ENCODE measurements at regions of chr5 and their contacts with region 1.

Region 1: DNA sequence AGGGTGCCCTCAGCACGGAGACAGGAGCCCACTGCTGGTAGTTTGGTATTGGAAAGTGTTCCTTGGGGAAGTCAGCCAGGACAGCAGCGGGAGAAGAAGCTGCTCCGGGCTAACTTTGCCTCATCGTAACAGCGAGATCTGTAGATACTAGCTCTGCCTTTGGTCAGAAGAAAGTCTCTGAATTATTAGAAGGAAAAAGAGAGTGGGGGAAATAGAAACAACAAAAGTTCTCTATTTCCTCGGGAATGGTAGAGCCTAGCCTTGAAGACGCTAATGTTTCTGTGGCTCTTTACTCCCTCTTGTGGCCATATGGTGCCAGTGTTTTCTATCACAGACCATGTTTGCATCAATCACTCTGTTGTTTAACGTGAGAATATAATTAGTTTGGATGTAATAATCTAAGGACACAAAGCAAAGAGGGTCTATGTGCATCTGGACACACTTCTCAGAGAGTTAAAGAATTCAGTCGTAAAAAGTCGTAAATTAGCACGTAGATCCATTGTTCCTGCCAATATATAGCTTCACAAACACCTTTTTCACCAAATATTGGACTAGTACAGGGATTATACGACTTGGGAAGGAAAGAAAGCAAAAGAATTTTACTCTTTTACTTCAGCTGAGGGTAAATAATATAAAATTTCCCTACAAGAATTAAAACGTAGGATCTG is 40.2 kb upstream of the HSD17B4 start:
- DNase-seq: peak; percentile 58
- H3K4me3 Mint-ChIP-seq: peak overlapping the region; percentile 70
- H3K27ac Mint-ChIP-seq: peak overlapping the region; percentile 13
- H3K4me1 Mint-ChIP-seq: peaks cover 32% of the 10 kb centered on the region
- H3K27me3 Mint-ChIP-seq: peaks cover 6% of the 10 kb centered on the region

Region 2: DNA sequence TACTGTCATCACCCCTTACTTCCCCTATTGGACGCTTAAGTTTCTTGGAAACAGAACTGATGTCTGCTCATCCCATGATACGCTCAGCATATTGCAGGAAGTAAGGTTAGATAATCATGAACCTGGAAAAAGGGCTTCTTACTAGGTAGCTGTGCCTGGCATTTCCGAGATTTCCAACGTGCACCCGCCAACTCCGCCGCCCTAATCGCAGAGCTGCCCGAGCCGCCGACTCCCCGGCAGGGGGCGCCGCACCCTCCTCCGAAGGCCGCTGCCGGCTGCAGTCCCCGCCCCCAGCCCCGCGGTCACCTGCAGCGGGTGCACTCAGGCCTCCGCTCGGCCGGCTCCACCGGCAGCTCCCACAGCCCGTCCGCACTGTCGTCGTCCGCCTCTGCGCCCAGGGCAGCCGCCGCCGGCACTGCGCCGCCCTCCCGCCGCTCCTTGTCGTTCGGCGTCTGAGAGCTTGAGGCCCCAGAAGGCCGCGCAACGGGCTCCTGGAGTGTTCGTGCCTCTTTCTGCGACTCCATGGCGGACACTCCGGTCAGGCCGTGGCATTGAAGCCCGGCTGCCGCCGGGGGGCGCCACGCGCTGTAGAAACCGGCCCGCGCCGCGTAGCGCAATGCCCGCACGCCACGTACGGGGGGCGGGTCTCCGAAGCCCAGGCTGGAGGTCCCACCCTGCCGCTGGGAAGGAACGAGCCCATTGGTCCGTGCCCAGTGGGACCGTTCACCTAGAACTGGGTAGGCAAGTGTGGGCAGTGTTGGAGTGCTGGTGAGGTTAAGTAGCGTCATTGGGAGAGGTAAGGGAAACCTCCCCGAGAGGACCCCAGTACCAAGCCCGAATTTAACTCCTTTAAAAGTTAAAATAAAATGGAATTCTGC is 423.8 kb before region 1 on chr5 and contains the start of gene DTWD2:
- CTCF ChIA-PET with region 1: interaction called, 127 read pairs
- POLR2A ChIA-PET with region 1: interaction called, 9 read pairs
- DNase-seq: peak; percentile 91
- H3K4me3 Mint-ChIP-seq: peak within 1 kb of the TSS; percentile 70
- H3K27ac Mint-ChIP-seq: peak within 1 kb of the TSS; percentile 21
- H3K4me1 Mint-ChIP-seq: peaks cover 13% of the 10 kb centered on the region
- H3K27me3 Mint-ChIP-seq: no peaks in the 10 kb centered on the region
- total RNA-seq, gene DTWD2: 1.3 to 1.6 TPM

Region 3: DNA sequence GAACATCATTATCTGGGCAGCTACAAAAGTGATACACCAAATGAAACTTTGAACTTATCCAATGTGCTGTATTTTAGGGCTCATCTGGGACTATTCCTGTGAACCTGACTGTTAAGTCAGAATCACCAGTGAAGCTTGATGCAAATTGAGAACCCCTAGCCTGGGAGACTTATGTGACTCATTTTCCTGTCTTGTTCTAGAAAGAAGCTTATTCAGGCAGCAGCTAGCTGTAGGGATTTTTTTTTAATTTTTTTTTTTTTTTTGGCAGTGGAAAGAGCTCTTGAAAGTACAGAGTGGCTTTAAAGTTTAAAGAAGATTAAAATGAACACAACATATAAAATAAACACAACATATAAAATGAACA is 137.3 kb before region 1 on chr5:
- CTCF ChIA-PET with region 1: interaction called, 12 read pairs
- POLR2A ChIA-PET with region 1: interaction called, 5 read pairs
- DNase-seq: no peak
- H3K4me3 Mint-ChIP-seq: peak overlapping the region; percentile 71
- H3K27ac Mint-ChIP-seq: peak overlapping the region; percentile 89
- H3K4me1 Mint-ChIP-seq: peaks cover 89% of the 10 kb centered on the region
- H3K27me3 Mint-ChIP-seq: no peaks in the 10 kb centered on the region

Region 4: GRCh38 chr5:119315516-119315949 is 96.5 kb before region 1 on chr5:
- CTCF ChIA-PET with region 1: interaction called, 46 read pairs
- POLR2A ChIA-PET with region 1: interaction called, 13 read pairs
- DNase-seq: peak; percentile 63
- H3K4me3 Mint-ChIP-seq: peak overlapping the region; percentile 21
- H3K27ac Mint-ChIP-seq: peak overlapping the region; percentile 77
- H3K4me1 Mint-ChIP-seq: peaks cover 94% of the 10 kb centered on the region
- H3K27me3 Mint-ChIP-seq: no peaks in the 10 kb centered on the region

Region 5: DNA sequence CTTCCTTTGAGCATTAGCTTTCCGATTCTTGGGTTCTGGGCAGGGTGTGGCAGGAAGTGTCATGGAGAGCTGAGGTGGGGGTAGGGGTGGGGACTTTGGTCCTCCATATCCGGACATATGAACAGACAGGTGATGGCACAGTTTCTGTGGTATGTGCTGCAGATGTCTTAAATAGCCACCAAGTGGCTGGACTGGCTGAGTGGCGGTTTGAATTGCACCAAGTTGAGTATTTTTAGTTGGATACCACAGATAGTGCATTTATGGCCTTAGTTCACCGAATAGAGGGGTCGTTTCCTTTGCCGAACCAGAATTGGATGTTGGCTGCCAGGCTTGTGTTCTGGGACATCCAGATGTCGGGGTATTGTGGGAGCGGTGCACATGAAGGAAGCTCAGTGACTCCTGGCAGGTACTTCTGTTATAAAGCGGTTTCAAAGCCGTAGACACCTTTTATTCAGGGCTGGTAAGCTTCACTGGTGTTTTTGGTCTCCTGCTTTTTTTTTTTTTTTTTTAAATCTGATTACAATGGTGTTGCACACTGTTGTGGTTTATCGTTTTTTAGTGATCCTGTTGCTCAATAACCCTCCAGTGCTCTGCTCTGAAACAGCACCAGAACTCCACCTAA is 71.4 kb before region 1 on chr5:
- CTCF ChIA-PET with region 1: interaction called, 38 read pairs
- POLR2A ChIA-PET with region 1: interaction called, 3 read pairs
- DNase-seq: peak; percentile 85
- H3K4me3 Mint-ChIP-seq: peak overlapping the region; percentile 77
- H3K27ac Mint-ChIP-seq: peak overlapping the region; percentile 94
- H3K4me1 Mint-ChIP-seq: peaks cover 90% of the 10 kb centered on the region
- H3K27me3 Mint-ChIP-seq: no peaks in the 10 kb centered on the region

Region 6: DNA sequence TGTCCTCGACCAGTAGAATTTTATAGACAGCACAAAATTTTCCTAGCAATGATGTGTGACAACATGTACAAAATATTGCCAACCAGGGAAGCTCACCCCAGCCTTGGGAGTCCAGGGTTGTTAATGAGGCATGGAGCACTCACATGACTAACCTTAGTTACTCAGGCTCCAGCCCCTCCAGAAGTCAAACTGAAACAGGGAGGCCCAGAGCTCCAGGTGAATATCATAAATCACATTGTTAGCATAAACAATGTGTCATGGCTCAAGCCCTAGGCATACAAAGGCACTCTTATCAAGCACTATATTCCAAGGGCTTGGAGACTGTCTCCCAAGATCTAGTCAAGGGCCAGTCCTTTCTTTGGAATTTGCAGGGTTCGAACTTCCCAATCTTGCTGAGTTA is 11.8 kb before region 1 on chr5:
- CTCF ChIA-PET with region 1: interaction called, 10 read pairs
- POLR2A ChIA-PET with region 1: no interaction called
- DNase-seq: no peak
- H3K4me3 Mint-ChIP-seq: no peak overlapping the region
- H3K27ac Mint-ChIP-seq: no peak overlapping the region
- H3K4me1 Mint-ChIP-seq: peaks cover 31% of the 10 kb centered on the region
- H3K27me3 Mint-ChIP-seq: no peaks in the 10 kb centered on the region